CD4-positive, alpha-beta T cell (primary cell): ENCODE measurements at regions of chr5 and their contacts with region 1.

Region 1: GRCh38 chr5:110757118-110757729 is 18.4 kb downstream of the SLC25A46 start:
- DNase-seq: peak in 5 of 14 experiments; percentile 4 to 69 (median 48)
- ATAC-seq: peak; percentile 19
- H3K4me3 ChIP-seq: no peak overlapping the region
- H3K4me3 Mint-ChIP-seq: no peak overlapping the region
- H3K27ac ChIP-seq: no peak overlapping the region
- H3K27ac Mint-ChIP-seq: peak overlapping the region; percentile 40
- H3K4me1 ChIP-seq: peaks cover 4% of the 10 kb centered on the region
- H3K4me1 Mint-ChIP-seq: peaks cover 27% of the 10 kb centered on the region
- H3K27me3 ChIP-seq: no peaks in the 10 kb centered on the region
- H3K27me3 Mint-ChIP-seq: no peaks in the 10 kb centered on the region
- CTCF ChIP-seq: peak; percentile 92

Region 2: GRCh38 chr5:110525762-110526161 is 231.5 kb before region 1 on chr5:
- CTCF ChIA-PET with region 1: no interaction called
- POLR2A ChIA-PET with region 1: no interaction called
- intact Hi-C with region 1: no loop called
- DNase-seq: no peak
- ATAC-seq: no peak
- H3K4me3 ChIP-seq: no peak overlapping the region
- H3K4me3 Mint-ChIP-seq: no peak overlapping the region
- H3K27ac ChIP-seq: no peak overlapping the region
- H3K27ac Mint-ChIP-seq: no peak overlapping the region
- H3K4me1 ChIP-seq: no peaks in the 10 kb centered on the region
- H3K4me1 Mint-ChIP-seq: no peaks in the 10 kb centered on the region
- H3K27me3 ChIP-seq: no peaks in the 10 kb centered on the region
- H3K27me3 Mint-ChIP-seq: peaks cover 11% of the 10 kb centered on the region
- CTCF ChIP-seq: no peak

Region 3: GRCh38 chr5:110852053-110852452 is 94.8 kb after region 1 on chr5:
- CTCF ChIA-PET with region 1: no interaction called
- POLR2A ChIA-PET with region 1: no interaction called
- intact Hi-C with region 1: no loop called
- DNase-seq: no peak
- ATAC-seq: no peak
- H3K4me3 ChIP-seq: no peak overlapping the region
- H3K4me3 Mint-ChIP-seq: no peak overlapping the region
- H3K27ac ChIP-seq: no peak overlapping the region
- H3K27ac Mint-ChIP-seq: no peak overlapping the region
- H3K4me1 ChIP-seq: no peaks in the 10 kb centered on the region
- H3K4me1 Mint-ChIP-seq: no peaks in the 10 kb centered on the region
- H3K27me3 ChIP-seq: no peaks in the 10 kb centered on the region
- H3K27me3 Mint-ChIP-seq: peaks cover 8% of the 10 kb centered on the region
- CTCF ChIP-seq: no peak

Region 4: GRCh38 chr5:111092062-111092853 is 335.0 kb after region 1 on chr5 and contains the start of gene WDR36:
- CTCF ChIA-PET with region 1: no interaction called
- POLR2A ChIA-PET with region 1: no interaction called
- intact Hi-C with region 1: loop called in 1 of 2 experiments (anchors 5 kb)
- DNase-seq: peak; percentile 78 to 93 (median 86)
- ATAC-seq: peak; percentile 93
- H3K4me3 ChIP-seq: peak within 1 kb of the TSS; percentile 89
- H3K4me3 Mint-ChIP-seq: peak within 1 kb of the TSS; percentile 90
- H3K27ac ChIP-seq: peak within 1 kb of the TSS; percentile 68 to 85
- H3K27ac Mint-ChIP-seq: peak within 1 kb of the TSS; percentile 94
- H3K4me1 ChIP-seq: peaks cover 9% of the 10 kb centered on the region
- H3K4me1 Mint-ChIP-seq: peaks cover 41% of the 10 kb centered on the region
- H3K27me3 ChIP-seq: no peaks in the 10 kb centered on the region
- H3K27me3 Mint-ChIP-seq: peaks cover 9% of the 10 kb centered on the region
- CTCF ChIP-seq: no peak
- total RNA-seq, gene WDR36: 22.0 to 22.4 TPM

Region 5: DNA sequence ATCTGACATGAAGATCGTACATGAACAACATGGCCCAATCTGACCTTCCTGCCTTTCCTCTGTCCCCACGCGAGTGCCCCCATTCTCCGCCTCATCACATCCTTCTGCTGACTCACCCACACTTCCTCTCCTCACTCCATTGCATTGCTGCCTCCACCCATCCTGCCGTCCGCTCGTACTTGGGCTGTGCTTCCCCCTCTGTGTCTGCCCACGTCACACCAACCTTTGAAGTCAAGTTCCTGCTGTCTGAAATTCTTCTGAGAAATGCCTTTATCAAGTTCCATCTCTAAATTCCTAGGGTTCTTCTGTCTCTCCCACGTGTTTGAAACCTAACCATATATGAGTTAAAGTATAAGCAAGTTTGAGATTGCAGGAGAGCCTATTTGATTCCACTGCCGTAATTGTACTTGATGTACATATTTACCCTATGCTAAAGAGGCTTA is 773.1 kb after region 1 on chr5:
- CTCF ChIA-PET with region 1: no interaction called
- POLR2A ChIA-PET with region 1: no interaction called
- intact Hi-C with region 1: loop called in 1 of 2 experiments (anchors 5 kb)
- DNase-seq: peak; percentile 59 to 97 (median 78)
- ATAC-seq: peak; percentile 98
- H3K4me3 ChIP-seq: peak overlapping the region; percentile 21
- H3K4me3 Mint-ChIP-seq: peak overlapping the region; percentile 3
- H3K27ac ChIP-seq: peak overlapping the region; percentile 57 to 73
- H3K27ac Mint-ChIP-seq: peak overlapping the region; percentile 71
- H3K4me1 ChIP-seq: peaks cover 13% of the 10 kb centered on the region
- H3K4me1 Mint-ChIP-seq: peaks cover 14% of the 10 kb centered on the region
- H3K27me3 ChIP-seq: no peaks in the 10 kb centered on the region
- H3K27me3 Mint-ChIP-seq: no peaks in the 10 kb centered on the region
- CTCF ChIP-seq: no peak

Region 6: GRCh38 chr5:111550279-111551020 is 793.2 kb after region 1 on chr5:
- CTCF ChIA-PET with region 1: no interaction called
- POLR2A ChIA-PET with region 1: no interaction called
- intact Hi-C with region 1: loop called in 1 of 2 experiments (anchors 10 kb)
- DNase-seq: peak; percentile 37 to 83 (median 57)
- ATAC-seq: peak; percentile 90
- H3K4me3 ChIP-seq: no peak overlapping the region
- H3K4me3 Mint-ChIP-seq: no peak overlapping the region
- H3K27ac ChIP-seq: no peak overlapping the region
- H3K27ac Mint-ChIP-seq: no peak overlapping the region
- H3K4me1 ChIP-seq: peaks cover 9% of the 10 kb centered on the region
- H3K4me1 Mint-ChIP-seq: peaks cover 21% of the 10 kb centered on the region
- H3K27me3 ChIP-seq: no peaks in the 10 kb centered on the region
- H3K27me3 Mint-ChIP-seq: peaks cover 3% of the 10 kb centered on the region
- CTCF ChIP-seq: peak; percentile 68

Region 7: GRCh38 chr5:112146323-112147226 is 1389.4 kb after region 1 on chr5:
- CTCF ChIA-PET with region 1: no interaction called
- POLR2A ChIA-PET with region 1: no interaction called
- intact Hi-C with region 1: loop called in 1 of 2 experiments (anchors 5 kb)
- DNase-seq: peak; percentile 14 to 81 (median 40)
- ATAC-seq: peak; percentile 94
- H3K4me3 ChIP-seq: no peak overlapping the region
- H3K4me3 Mint-ChIP-seq: no peak overlapping the region
- H3K27ac ChIP-seq: no peak overlapping the region
- H3K27ac Mint-ChIP-seq: no peak overlapping the region
- H3K4me1 ChIP-seq: no peaks in the 10 kb centered on the region
- H3K4me1 Mint-ChIP-seq: no peaks in the 10 kb centered on the region
- H3K27me3 ChIP-seq: peaks cover 0 to under 1% of the 10 kb centered on the region in 2 experiments
- H3K27me3 Mint-ChIP-seq: peaks cover 7% of the 10 kb centered on the region
- CTCF ChIP-seq: peak; percentile 84